GM12878 (cell line): ENCODE measurements at regions of chr4 and their contacts with region 1.

Region 1: GRCh38 chr4:163755013-163755412 is 260.5 kb downstream of the TMA16 start:
- DNase-seq: peak; percentile 12
- ATAC-seq: peak; percentile 92
- H3K4me3 ChIP-seq: no peak overlapping the region
- H3K27ac ChIP-seq: no peak overlapping the region
- H3K4me1 ChIP-seq: no peaks in the 10 kb centered on the region; the same call in 1 of the 2 replicates
- H3K27me3 ChIP-seq: no peaks in the 10 kb centered on the region
- CTCF ChIP-seq: peak in 2 of 3 experiments; percentile 47 to 65
- EP300 ChIP-seq: no peak
- POLR2A ChIP-seq: no peak
- RAD21 ChIP-seq: peak; percentile 64

Region 2: GRCh38 chr4:163484906-163485305 is 270.1 kb before region 1 on chr4:
- CTCF ChIA-PET with region 1: interaction called, 3 read pairs
- POLR2A ChIA-PET with region 1: no interaction called
- RAD21 ChIA-PET with region 1: no interaction called
- SMC1A ChIA-PET with region 1: no interaction called
- in situ Hi-C with region 1: no loop called
- intact Hi-C with region 1: loop called (anchors 2 kb)
- DNase-seq: no peak
- ATAC-seq: peak; percentile 87
- H3K4me3 ChIP-seq: no peak overlapping the region
- H3K27ac ChIP-seq: no peak overlapping the region
- H3K4me1 ChIP-seq: peaks cover 12% of the 10 kb centered on the region; the same call in 1 of the 2 replicates
- H3K27me3 ChIP-seq: no peaks in the 10 kb centered on the region
- CTCF ChIP-seq: peak; percentile 55 to 73 (median 59); a peak in 5 of 6 replicates
- EP300 ChIP-seq: no peak
- POLR2A ChIP-seq: no peak
- RAD21 ChIP-seq: peak; percentile 91

Region 3: GRCh38 chr4:163603257-163603656 is 151.8 kb before region 1 on chr4:
- CTCF ChIA-PET with region 1: no interaction called
- POLR2A ChIA-PET with region 1: no interaction called
- RAD21 ChIA-PET with region 1: no interaction called
- SMC1A ChIA-PET with region 1: no interaction called
- in situ Hi-C with region 1: no loop called
- intact Hi-C with region 1: no loop called
- DNase-seq: no peak
- ATAC-seq: peak; percentile 42; the same call in 2 of the 3 replicates
- H3K4me3 ChIP-seq: no peak overlapping the region
- H3K27ac ChIP-seq: no peak overlapping the region
- H3K4me1 ChIP-seq: peaks cover 29% of the 10 kb centered on the region
- H3K27me3 ChIP-seq: no peaks in the 10 kb centered on the region
- CTCF ChIP-seq: no peak
- EP300 ChIP-seq: no peak
- POLR2A ChIP-seq: no peak
- RAD21 ChIP-seq: no peak

Region 4: GRCh38 chr4:163673848-163674697 is 80.9 kb before region 1 on chr4:
- CTCF ChIA-PET with region 1: interaction called, 30 read pairs
- POLR2A ChIA-PET with region 1: no interaction called
- RAD21 ChIA-PET with region 1: interaction called, 8 read pairs
- SMC1A ChIA-PET with region 1: interaction called, 39 read pairs
- in situ Hi-C with region 1: no loop called
- intact Hi-C with region 1: no loop called
- DNase-seq: no peak
- ATAC-seq: peak; percentile 90
- H3K4me3 ChIP-seq: no peak overlapping the region; the same call in 1 of the 2 replicates
- H3K27ac ChIP-seq: no peak overlapping the region
- H3K4me1 ChIP-seq: no peaks in the 10 kb centered on the region; the same call in 1 of the 2 replicates
- H3K27me3 ChIP-seq: no peaks in the 10 kb centered on the region
- CTCF ChIP-seq: no peak
- EP300 ChIP-seq: no peak
- POLR2A ChIP-seq: no peak
- RAD21 ChIP-seq: no peak

Region 5: DNA sequence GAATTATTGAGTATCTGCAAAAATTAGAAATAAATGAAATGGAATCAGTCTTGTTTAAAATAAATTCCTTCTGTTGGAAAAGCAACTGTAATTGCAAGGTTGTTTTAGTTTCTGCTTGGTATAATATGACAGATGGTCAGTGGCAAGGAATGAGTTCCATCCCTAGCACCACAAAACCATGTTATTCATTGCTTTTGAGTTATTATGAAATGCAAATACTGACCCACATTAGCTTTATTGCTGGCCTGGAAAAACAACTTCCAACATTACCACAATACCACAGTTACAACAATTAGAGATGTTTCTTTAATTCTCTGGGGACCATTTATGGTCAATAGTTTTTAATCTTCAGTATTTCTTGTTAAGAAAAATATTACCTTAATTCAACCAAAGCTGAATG is 66.2 kb before region 1 on chr4:
- CTCF ChIA-PET with region 1: interaction called, 23 read pairs
- POLR2A ChIA-PET with region 1: interaction called, 4 read pairs
- RAD21 ChIA-PET with region 1: interaction called, 10 read pairs
- SMC1A ChIA-PET with region 1: interaction called, 21 read pairs
- in situ Hi-C with region 1: no loop called
- intact Hi-C with region 1: no loop called
- DNase-seq: no peak
- ATAC-seq: no peak
- H3K4me3 ChIP-seq: no peak overlapping the region
- H3K27ac ChIP-seq: no peak overlapping the region
- H3K4me1 ChIP-seq: no peaks in the 10 kb centered on the region
- H3K27me3 ChIP-seq: no peaks in the 10 kb centered on the region
- CTCF ChIP-seq: no peak
- EP300 ChIP-seq: no peak
- POLR2A ChIP-seq: no peak
- RAD21 ChIP-seq: no peak

Region 6: GRCh38 chr4:163744861-163745260 is 10.2 kb before region 1 on chr4:
- CTCF ChIA-PET with region 1: interaction called, 33 read pairs
- POLR2A ChIA-PET with region 1: no interaction called
- RAD21 ChIA-PET with region 1: interaction called, 24 read pairs
- SMC1A ChIA-PET with region 1: interaction called, 19 read pairs
- in situ Hi-C with region 1: no loop called
- intact Hi-C with region 1: no loop called
- DNase-seq: peak; percentile 57
- ATAC-seq: peak; percentile 94
- H3K4me3 ChIP-seq: 0 out of 2 replicates have a peak overlapping the region, but pooled peaks have one; percentile 5
- H3K27ac ChIP-seq: peak overlapping the region; percentile 57
- H3K4me1 ChIP-seq: peaks cover 10% of the 10 kb centered on the region
- H3K27me3 ChIP-seq: no peaks in the 10 kb centered on the region
- CTCF ChIP-seq: no peak
- EP300 ChIP-seq: peak; percentile 22 to 58; a peak in 2 of 4 replicates
- POLR2A ChIP-seq: no peak
- RAD21 ChIP-seq: no peak

Region 7: DNA sequence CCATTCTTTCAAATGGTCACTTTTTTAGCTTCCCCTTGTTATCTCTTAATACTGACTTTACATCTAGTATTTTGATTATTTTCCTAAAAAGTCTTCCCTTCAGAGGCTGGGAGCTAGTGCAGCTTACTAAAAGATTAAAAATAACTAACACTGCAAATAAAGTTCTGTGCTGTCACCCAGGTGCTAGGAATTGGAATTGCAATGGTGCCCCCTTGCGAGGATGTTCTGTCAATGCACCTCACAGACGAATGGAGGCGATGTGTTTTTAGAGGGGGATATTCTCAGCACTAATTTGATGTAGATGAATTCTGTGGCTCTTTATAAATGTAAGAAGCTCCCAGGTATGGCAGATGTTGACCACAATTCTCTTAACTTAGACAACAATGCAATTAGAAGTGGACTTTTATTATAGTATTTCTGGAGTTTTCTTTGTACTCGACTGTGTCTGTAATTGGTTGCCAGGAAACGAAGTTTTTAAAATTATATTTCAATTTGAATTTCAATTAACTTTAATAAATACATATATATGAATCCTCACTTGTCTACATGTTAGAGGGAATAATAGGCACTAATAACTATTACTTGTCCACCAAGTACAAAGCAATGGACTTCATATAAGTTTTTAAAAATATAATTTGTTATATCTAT is 976.9 kb after region 1 on chr4:
- CTCF ChIA-PET with region 1: interaction called, 10 read pairs
- POLR2A ChIA-PET with region 1: no interaction called
- RAD21 ChIA-PET with region 1: interaction called, 3 read pairs
- SMC1A ChIA-PET with region 1: interaction called, 8 read pairs
- in situ Hi-C with region 1: loop called (anchors 25 kb)
- intact Hi-C with region 1: no loop called
- DNase-seq: peak; percentile 3
- ATAC-seq: peak; percentile 85
- H3K4me3 ChIP-seq: no peak overlapping the region
- H3K27ac ChIP-seq: no peak overlapping the region
- H3K4me1 ChIP-seq: no peaks in the 10 kb centered on the region
- H3K27me3 ChIP-seq: no peaks in the 10 kb centered on the region; a peak in 1 of 4 replicates
- CTCF ChIP-seq: peak; percentile 82 to 88 (median 82)
- EP300 ChIP-seq: no peak
- POLR2A ChIP-seq: no peak
- RAD21 ChIP-seq: peak; percentile 92